ENCODE measurements at regions of chr6 and their contacts with region 1.

Region 1: DNA sequence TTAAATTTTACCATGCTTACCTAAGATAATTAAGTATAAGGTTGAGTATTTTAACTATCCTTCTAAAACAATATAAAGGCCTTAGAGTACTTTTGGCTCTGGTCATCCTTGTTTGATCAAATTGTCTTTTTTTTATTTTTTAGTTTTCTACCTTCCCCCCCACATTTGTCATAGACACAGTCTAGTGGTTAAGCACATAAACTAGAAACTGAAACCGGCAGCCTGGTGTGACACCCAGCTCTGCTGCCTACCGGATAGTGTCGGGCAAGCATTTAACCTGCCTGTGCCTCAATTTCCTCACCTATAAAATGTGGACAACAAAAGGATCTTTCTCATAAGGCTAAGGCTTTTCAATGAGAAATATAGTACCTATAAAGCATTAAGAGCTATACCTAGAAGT is 21.6 kb upstream of the TULP4 start:
- DNase-seq: peak; percentile 75
- H3K4me3 Mint-ChIP-seq: peak overlapping the region; percentile 50
- H3K27ac Mint-ChIP-seq: peak overlapping the region; percentile 79
- H3K4me1 Mint-ChIP-seq: peaks cover 37% of the 10 kb centered on the region
- H3K27me3 Mint-ChIP-seq: no peaks in the 10 kb centered on the region

Region 2: DNA sequence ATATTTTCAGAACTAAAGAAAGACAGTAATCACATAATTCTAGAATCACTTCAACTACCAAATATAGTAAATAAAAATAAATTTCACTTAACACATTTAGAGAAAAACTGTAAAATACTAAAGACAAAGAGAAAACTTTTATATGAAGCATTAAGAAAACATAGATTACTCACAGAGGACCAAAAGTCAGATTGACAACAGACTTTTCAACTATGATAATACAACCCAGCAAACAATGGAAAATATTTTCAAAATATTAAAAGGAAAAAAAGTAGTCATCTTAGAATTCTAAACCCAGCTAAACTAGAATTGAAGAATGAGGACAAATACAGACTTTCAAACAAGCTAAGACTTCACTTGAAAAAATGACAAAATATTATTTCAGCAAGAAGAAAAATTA is 1678.3 kb before region 1 on chr6:
- CTCF ChIA-PET with region 1: no interaction called
- POLR2A ChIA-PET with region 1: no interaction called
- intact Hi-C with region 1: no loop called
- DNase-seq: no peak
- H3K4me3 Mint-ChIP-seq: no peak overlapping the region
- H3K27ac Mint-ChIP-seq: no peak overlapping the region
- H3K4me1 Mint-ChIP-seq: no peaks in the 10 kb centered on the region
- H3K27me3 Mint-ChIP-seq: peaks cover 6% of the 10 kb centered on the region

Region 3: DNA sequence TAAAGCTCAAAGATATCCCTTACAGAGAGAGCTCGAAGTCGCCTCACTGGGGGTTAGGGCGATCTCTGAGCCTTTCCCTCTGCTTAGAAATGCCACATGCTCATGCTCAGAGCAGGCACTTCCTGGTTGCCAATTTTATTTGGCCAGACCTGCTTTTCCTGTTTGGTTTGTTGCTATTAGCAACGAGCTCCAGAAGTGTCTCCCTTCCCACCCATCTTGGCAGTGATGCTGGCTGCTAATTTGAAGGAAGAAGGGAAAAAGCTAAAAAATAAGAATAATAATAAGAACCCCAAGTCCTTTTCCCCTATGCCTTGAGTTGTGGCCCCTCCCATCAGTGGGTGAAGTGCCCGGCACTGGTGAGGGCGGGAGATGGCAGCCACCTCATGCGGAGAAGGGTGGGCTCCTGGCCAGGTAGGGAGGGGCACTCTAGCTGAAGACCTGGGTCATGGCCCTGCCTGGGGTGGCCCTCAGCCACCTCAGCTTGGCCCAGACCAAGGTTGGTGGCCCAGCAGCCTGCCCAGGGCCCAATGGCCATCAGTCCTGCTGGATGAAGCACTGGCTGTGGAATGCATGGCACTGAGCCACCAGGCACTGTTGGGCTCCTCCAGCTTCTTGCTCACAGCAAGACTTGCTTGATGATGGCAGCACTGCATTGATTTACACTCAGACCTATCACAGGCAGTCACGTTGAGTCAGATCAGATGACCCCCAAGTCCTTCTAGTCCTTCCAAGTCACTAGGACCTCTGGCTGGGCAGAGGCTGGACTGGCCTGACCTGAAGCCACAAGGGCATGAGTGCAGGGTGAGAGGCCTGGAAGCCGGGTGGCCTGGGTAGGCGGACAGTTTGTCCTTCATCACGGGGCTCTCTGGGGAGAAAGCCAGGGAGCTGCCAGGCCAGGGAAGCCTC is 230.0 kb before region 1 on chr6:
- CTCF ChIA-PET with region 1: no interaction called
- POLR2A ChIA-PET with region 1: no interaction called
- intact Hi-C with region 1: no loop called
- DNase-seq: no peak
- H3K4me3 Mint-ChIP-seq: no peak overlapping the region
- H3K27ac Mint-ChIP-seq: no peak overlapping the region
- H3K4me1 Mint-ChIP-seq: peaks cover 31% of the 10 kb centered on the region
- H3K27me3 Mint-ChIP-seq: no peaks in the 10 kb centered on the region

Region 4: GRCh38 chr6:158205169-158205944 is 85.3 kb before region 1 on chr6:
- CTCF ChIA-PET with region 1: no interaction called
- POLR2A ChIA-PET with region 1: no interaction called
- intact Hi-C with region 1: no loop called
- DNase-seq: no peak
- H3K4me3 Mint-ChIP-seq: no peak overlapping the region
- H3K27ac Mint-ChIP-seq: no peak overlapping the region
- H3K4me1 Mint-ChIP-seq: peaks cover 28% of the 10 kb centered on the region
- H3K27me3 Mint-ChIP-seq: no peaks in the 10 kb centered on the region

Region 5: GRCh38 chr6:158231551-158232315 is 58.9 kb before region 1 on chr6:
- CTCF ChIA-PET with region 1: interaction called, 3 read pairs
- POLR2A ChIA-PET with region 1: no interaction called
- intact Hi-C with region 1: loop called (anchors 2 kb)
- DNase-seq: peak; percentile 76
- H3K4me3 Mint-ChIP-seq: peak overlapping the region; percentile 81
- H3K27ac Mint-ChIP-seq: peak overlapping the region; percentile 46
- H3K4me1 Mint-ChIP-seq: peaks cover 31% of the 10 kb centered on the region
- H3K27me3 Mint-ChIP-seq: no peaks in the 10 kb centered on the region